B cell (primary cell): ENCODE measurements at regions of chr3 and their contacts with region 1.

Region 1: GRCh38 chr3:105686278-105686897 is 182.4 kb downstream of the CBLB start:
- DNase-seq: peak; percentile 49
- ATAC-seq: no peak
- H3K4me3 ChIP-seq: no peak overlapping the region
- H3K4me3 Mint-ChIP-seq: no peak overlapping the region
- H3K27ac ChIP-seq: no peak overlapping the region
- H3K27ac Mint-ChIP-seq: no peak overlapping the region
- H3K4me1 ChIP-seq: peaks cover 0 to 3% of the 10 kb centered on the region in 2 donors
- H3K4me1 Mint-ChIP-seq: peaks cover 6% of the 10 kb centered on the region
- H3K27me3 ChIP-seq: no peaks in the 10 kb centered on the region
- H3K27me3 Mint-ChIP-seq: no peaks in the 10 kb centered on the region
- CTCF ChIP-seq: peak; percentile 99

Region 2: DNA sequence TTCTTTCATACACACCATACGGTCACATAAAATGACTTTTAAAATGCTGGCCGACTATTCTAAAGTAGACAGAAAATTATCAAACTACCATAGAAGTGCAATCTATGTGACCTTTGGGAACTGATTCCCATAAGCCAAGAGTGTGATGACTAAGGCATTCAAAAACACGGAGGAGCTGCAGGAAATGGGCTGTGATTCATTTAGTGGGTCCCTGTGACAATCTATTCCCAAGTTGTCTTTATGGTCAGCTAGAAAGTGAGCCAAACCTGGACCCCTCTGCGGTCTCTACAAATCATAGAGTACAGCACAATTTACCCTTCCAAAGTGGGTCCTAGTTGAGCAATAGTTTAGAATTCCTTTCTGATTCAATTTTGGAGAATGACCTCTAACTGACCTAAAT is 434.0 kb after region 1 on chr3:
- CTCF ChIA-PET with region 1: interaction called, 10 read pairs
- POLR2A ChIA-PET with region 1: no interaction called
- intact Hi-C with region 1: loop called (anchors 1 kb)
- DNase-seq: no peak
- ATAC-seq: no peak
- H3K4me3 ChIP-seq: no peak overlapping the region
- H3K4me3 Mint-ChIP-seq: no peak overlapping the region
- H3K27ac ChIP-seq: no peak overlapping the region
- H3K27ac Mint-ChIP-seq: no peak overlapping the region
- H3K4me1 ChIP-seq: no peaks in the 10 kb centered on the region
- H3K4me1 Mint-ChIP-seq: peaks cover 9% of the 10 kb centered on the region
- H3K27me3 ChIP-seq: no peaks in the 10 kb centered on the region
- H3K27me3 Mint-ChIP-seq: no peaks in the 10 kb centered on the region
- CTCF ChIP-seq: no peak

Region 3: GRCh38 chr3:106161246-106161645 is 474.9 kb after region 1 on chr3:
- CTCF ChIA-PET with region 1: no interaction called
- POLR2A ChIA-PET with region 1: no interaction called
- intact Hi-C with region 1: no loop called
- DNase-seq: no peak
- ATAC-seq: no peak
- H3K4me3 ChIP-seq: no peak overlapping the region
- H3K4me3 Mint-ChIP-seq: no peak overlapping the region
- H3K27ac ChIP-seq: no peak overlapping the region
- H3K27ac Mint-ChIP-seq: no peak overlapping the region
- H3K4me1 ChIP-seq: no peaks in the 10 kb centered on the region
- H3K4me1 Mint-ChIP-seq: no peaks in the 10 kb centered on the region
- H3K27me3 ChIP-seq: no peaks in the 10 kb centered on the region
- H3K27me3 Mint-ChIP-seq: no peaks in the 10 kb centered on the region
- CTCF ChIP-seq: no peak

Region 4: DNA sequence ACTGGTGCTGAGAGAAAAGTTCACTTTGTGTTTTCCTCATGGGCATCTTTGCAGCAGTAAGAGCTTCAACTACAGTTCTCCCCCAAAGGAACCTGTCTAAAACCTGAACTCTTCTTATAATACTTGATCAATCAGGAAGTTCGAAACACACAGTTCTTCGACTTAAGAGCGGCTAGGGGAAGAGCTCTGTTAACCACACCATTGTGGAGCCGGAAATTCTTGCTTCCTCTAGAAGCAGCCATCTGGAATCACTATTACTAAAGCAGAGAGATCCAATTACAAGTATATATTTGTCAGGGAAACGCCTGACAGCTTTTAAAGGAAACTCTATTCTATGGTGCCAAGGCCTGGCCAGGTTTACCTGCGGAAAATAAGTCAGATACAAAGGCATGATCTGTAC is 519.8 kb after region 1 on chr3:
- CTCF ChIA-PET with region 1: interaction called, 8 read pairs
- POLR2A ChIA-PET with region 1: no interaction called
- intact Hi-C with region 1: loop called (anchors 5 kb)
- DNase-seq: peak; percentile 57
- ATAC-seq: peak; percentile 60
- H3K4me3 ChIP-seq: peak overlapping the region in 4 of 5 experiments; percentile 22 to 51 (median 34)
- H3K4me3 Mint-ChIP-seq: peak overlapping the region; percentile 68
- H3K27ac ChIP-seq: peak overlapping the region in 1 of 2 donors; percentile 31
- H3K27ac Mint-ChIP-seq: peak overlapping the region; percentile 42
- H3K4me1 ChIP-seq: peaks cover 15 to 23% of the 10 kb centered on the region in 2 donors
- H3K4me1 Mint-ChIP-seq: peaks cover 27% of the 10 kb centered on the region
- H3K27me3 ChIP-seq: no peaks in the 10 kb centered on the region
- H3K27me3 Mint-ChIP-seq: no peaks in the 10 kb centered on the region
- CTCF ChIP-seq: no peak

Region 5: GRCh38 chr3:106333911-106334618 is 647.7 kb after region 1 on chr3:
- CTCF ChIA-PET with region 1: no interaction called
- POLR2A ChIA-PET with region 1: no interaction called
- intact Hi-C with region 1: loop called (anchors 10 kb)
- DNase-seq: no peak
- ATAC-seq: peak; percentile 47
- H3K4me3 ChIP-seq: no peak overlapping the region
- H3K4me3 Mint-ChIP-seq: no peak overlapping the region
- H3K27ac ChIP-seq: no peak overlapping the region
- H3K27ac Mint-ChIP-seq: no peak overlapping the region
- H3K4me1 ChIP-seq: peaks cover 6 to 16% of the 10 kb centered on the region in 2 donors
- H3K4me1 Mint-ChIP-seq: peaks cover 27% of the 10 kb centered on the region
- H3K27me3 ChIP-seq: no peaks in the 10 kb centered on the region
- H3K27me3 Mint-ChIP-seq: no peaks in the 10 kb centered on the region
- CTCF ChIP-seq: no peak

Region 6: DNA sequence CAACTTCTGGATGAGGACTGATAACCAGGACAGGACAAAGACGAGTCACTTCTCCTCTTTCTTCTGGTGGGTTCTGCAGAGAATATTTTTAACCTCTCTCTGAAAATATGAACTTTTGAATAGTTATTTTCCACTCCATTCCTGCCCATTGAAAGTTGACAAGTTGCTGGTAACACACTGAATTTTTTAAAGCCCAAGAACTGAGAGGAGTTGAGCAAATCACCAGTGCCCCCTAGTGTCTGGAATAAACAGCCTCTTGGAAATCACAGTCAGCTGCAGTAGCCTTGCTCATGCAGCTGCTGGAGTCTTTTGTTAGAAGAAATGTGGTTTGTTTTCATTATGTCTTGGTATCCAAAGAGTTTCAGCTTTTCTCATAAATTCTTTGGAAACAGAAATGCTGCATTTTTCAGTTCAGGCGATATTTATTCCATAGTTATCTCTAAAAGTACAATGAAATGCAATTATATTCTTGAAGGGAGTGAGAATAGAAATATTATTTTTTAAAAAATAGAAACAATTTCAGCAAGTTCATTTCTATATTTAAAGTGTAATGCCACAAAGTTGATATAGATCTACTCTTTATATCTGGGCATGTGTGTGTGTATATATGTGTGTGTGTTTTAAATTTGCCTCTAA is 923.4 kb after region 1 on chr3:
- CTCF ChIA-PET with region 1: interaction called, 73 read pairs
- POLR2A ChIA-PET with region 1: no interaction called
- intact Hi-C with region 1: loop called (anchors 1 kb)
- DNase-seq: peak; percentile 76
- ATAC-seq: peak; percentile 65
- H3K4me3 ChIP-seq: no peak overlapping the region
- H3K4me3 Mint-ChIP-seq: no peak overlapping the region
- H3K27ac ChIP-seq: no peak overlapping the region
- H3K27ac Mint-ChIP-seq: no peak overlapping the region
- H3K4me1 ChIP-seq: no peaks in the 10 kb centered on the region
- H3K4me1 Mint-ChIP-seq: peaks cover 2% of the 10 kb centered on the region
- H3K27me3 ChIP-seq: no peaks in the 10 kb centered on the region
- H3K27me3 Mint-ChIP-seq: no peaks in the 10 kb centered on the region
- CTCF ChIP-seq: peak; percentile 93

Region 7: GRCh38 chr3:107064445-107065060 is 1378.2 kb after region 1 on chr3:
- CTCF ChIA-PET with region 1: no interaction called
- POLR2A ChIA-PET with region 1: no interaction called
- intact Hi-C with region 1: loop called (anchors 2 kb)
- DNase-seq: peak; percentile 68
- ATAC-seq: peak; percentile 64
- H3K4me3 ChIP-seq: no peak overlapping the region
- H3K4me3 Mint-ChIP-seq: no peak overlapping the region
- H3K27ac ChIP-seq: no peak overlapping the region
- H3K27ac Mint-ChIP-seq: no peak overlapping the region
- H3K4me1 ChIP-seq: no peaks in the 10 kb centered on the region
- H3K4me1 Mint-ChIP-seq: peaks cover 4% of the 10 kb centered on the region
- H3K27me3 ChIP-seq: peaks cover 0 to 6% (median 0%) of the 10 kb centered on the region in 4 experiments
- H3K27me3 Mint-ChIP-seq: peaks cover 19% of the 10 kb centered on the region
- CTCF ChIP-seq: peak; percentile 93